Ascending aorta (tissue), 2 donors: ENCODE measurements at regions of chr6 and their contacts with region 1.

Region 1: GRCh38 chr6:127464881-127465459 is 5.8 kb upstream of the KIAA0408 start:
- DNase-seq: peak in 1 of 2 donors; percentile 75
- H3K4me3 ChIP-seq: no peak overlapping the region
- H3K27ac ChIP-seq: peak overlapping the region; percentile 59 to 63
- H3K4me1 ChIP-seq: peaks cover 0 to 9% of the 10 kb centered on the region in 2 donors
- H3K27me3 ChIP-seq: no peaks in the 10 kb centered on the region
- CTCF ChIP-seq: peak; percentile 56 to 76 (median 63)

Region 2: GRCh38 chr6:127302728-127303660 is 162.0 kb before region 1 on chr6:
- intact Hi-C with region 1: loop called (anchors 10 kb)
- DNase-seq: no peak
- H3K4me3 ChIP-seq: no peak overlapping the region
- H3K27ac ChIP-seq: no peak overlapping the region
- H3K4me1 ChIP-seq: peaks cover 0 to 13% of the 10 kb centered on the region in 2 donors
- H3K27me3 ChIP-seq: no peaks in the 10 kb centered on the region
- CTCF ChIP-seq: peak; percentile 44 to 73 (median 52)

Region 3: GRCh38 chr6:127420556-127420955 is 44.4 kb before region 1 on chr6:
- intact Hi-C with region 1: loop called (anchors 2 kb)
- DNase-seq: peak; percentile 55 to 87
- H3K4me3 ChIP-seq: no peak overlapping the region
- H3K27ac ChIP-seq: peak overlapping the region; percentile 12 to 25
- H3K4me1 ChIP-seq: peaks cover 0 to 9% of the 10 kb centered on the region in 2 donors
- H3K27me3 ChIP-seq: no peaks in the 10 kb centered on the region
- CTCF ChIP-seq: peak in 2 of 3 experiments; percentile 21 to 31

Region 4: DNA sequence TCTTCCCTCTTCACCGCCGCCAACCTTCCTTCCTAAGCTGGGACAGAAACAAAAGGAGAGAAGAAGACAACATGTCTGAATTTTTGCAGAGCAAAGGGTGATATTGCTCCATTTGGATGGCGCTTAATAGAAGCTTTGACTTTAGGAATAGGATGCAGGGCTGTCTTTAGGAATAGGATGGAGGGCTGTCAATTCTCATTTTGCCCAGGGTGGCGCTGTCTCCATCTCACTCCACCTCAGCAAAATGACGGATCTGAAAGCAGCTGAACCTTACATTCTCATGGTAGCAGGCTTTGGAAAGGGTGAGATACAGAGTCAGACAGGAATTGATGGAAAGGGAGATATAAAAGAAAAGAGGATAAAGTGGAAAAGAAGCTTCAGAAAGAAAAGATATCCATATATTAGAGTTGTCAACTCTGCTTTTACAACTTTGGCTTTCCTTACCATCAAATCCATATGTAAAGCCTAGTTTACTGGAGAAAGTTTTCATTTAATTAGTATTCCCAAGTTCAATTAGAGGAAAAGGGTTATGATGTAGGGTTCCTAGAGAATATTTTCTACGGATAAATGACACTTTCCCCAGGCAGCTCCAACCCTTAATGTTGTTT is 51.8 kb after region 1 on chr6:
- intact Hi-C with region 1: loop called (anchors 2 kb)
- DNase-seq: no peak
- H3K4me3 ChIP-seq: peak overlapping the region; percentile 77 to 80
- H3K27ac ChIP-seq: no peak overlapping the region
- H3K4me1 ChIP-seq: peaks cover 12 to 14% of the 10 kb centered on the region in 2 donors
- H3K27me3 ChIP-seq: peaks cover 12% of the 10 kb centered on the region
- CTCF ChIP-seq: peak in 2 of 3 experiments; percentile 51 to 54

Region 5: GRCh38 chr6:127539272-127539671 is 74.3 kb after region 1 on chr6:
- intact Hi-C with region 1: loop called (anchors 2 kb)
- DNase-seq: no peak
- H3K4me3 ChIP-seq: no peak overlapping the region
- H3K27ac ChIP-seq: no peak overlapping the region
- H3K4me1 ChIP-seq: no peaks in the 10 kb centered on the region
- H3K27me3 ChIP-seq: no peaks in the 10 kb centered on the region
- CTCF ChIP-seq: peak in 2 of 3 experiments; percentile 33 to 60